A673 (cell line): ENCODE measurements at regions of chrX and their contacts with region 1.

Region 1: GRCh38 chrX:31471229-31471628 is 399.4 kb upstream of the FTHL17 start:
- DNase-seq: no peak
- H3K4me3 ChIP-seq: no peak overlapping the region
- H3K27ac ChIP-seq: no peak overlapping the region
- H3K4me1 ChIP-seq: no peaks in the 10 kb centered on the region
- H3K27me3 ChIP-seq: peaks cover 9% of the 10 kb centered on the region
- CTCF ChIP-seq: no peak

Region 2: GRCh38 chrX:31543565-31544125 is 72.4 kb after region 1 on chrX:
- CTCF ChIA-PET with region 1: no interaction called
- POLR2A ChIA-PET with region 1: no interaction called
- intact Hi-C with region 1: loop called (anchors 10 kb)
- DNase-seq: no peak
- H3K4me3 ChIP-seq: no peak overlapping the region
- H3K27ac ChIP-seq: no peak overlapping the region
- H3K4me1 ChIP-seq: no peaks in the 10 kb centered on the region
- H3K27me3 ChIP-seq: no peaks in the 10 kb centered on the region
- CTCF ChIP-seq: no peak

Region 3: GRCh38 chrX:31649201-31649600 is 178.0 kb after region 1 on chrX:
- CTCF ChIA-PET with region 1: no interaction called
- POLR2A ChIA-PET with region 1: no interaction called
- intact Hi-C with region 1: loop called (anchors 10 kb)
- DNase-seq: no peak
- H3K4me3 ChIP-seq: no peak overlapping the region
- H3K27ac ChIP-seq: no peak overlapping the region
- H3K4me1 ChIP-seq: no peaks in the 10 kb centered on the region
- H3K27me3 ChIP-seq: no peaks in the 10 kb centered on the region
- CTCF ChIP-seq: no peak